ENCODE measurements at regions of chr3 and their contacts with region 1.

Region 1: GRCh38 chr3:171791695-171792082 is 18.6 kb downstream of the PLD1 start:
- DNase-seq: peak; percentile 50
- H3K4me3 Mint-ChIP-seq: peak overlapping the region; percentile 11
- H3K27ac Mint-ChIP-seq: peak overlapping the region; percentile 34
- H3K4me1 Mint-ChIP-seq: peaks cover 47% of the 10 kb centered on the region
- H3K27me3 Mint-ChIP-seq: no peaks in the 10 kb centered on the region
- CTCF ChIP-seq: no peak

Region 2: GRCh38 chr3:171646357-171647133 is 145.1 kb before region 1 on chr3:
- CTCF ChIA-PET with region 1: no interaction called
- intact Hi-C with region 1: no loop called
- DNase-seq: no peak
- H3K4me3 Mint-ChIP-seq: no peak overlapping the region
- H3K27ac Mint-ChIP-seq: no peak overlapping the region
- H3K4me1 Mint-ChIP-seq: peaks cover 9% of the 10 kb centered on the region
- H3K27me3 Mint-ChIP-seq: no peaks in the 10 kb centered on the region
- CTCF ChIP-seq: peak; percentile 63

Region 3: GRCh38 chr3:171809821-171810628 is 18.3 kb after region 1 on chr3 and contains the start of gene PLD1:
- CTCF ChIA-PET with region 1: interaction called, 10 read pairs
- intact Hi-C with region 1: no loop called
- DNase-seq: peak; percentile 97
- H3K4me3 Mint-ChIP-seq: peak within 1 kb of the TSS; percentile 96
- H3K27ac Mint-ChIP-seq: peak within 1 kb of the TSS; percentile 94
- H3K4me1 Mint-ChIP-seq: peaks cover 62% of the 10 kb centered on the region
- H3K27me3 Mint-ChIP-seq: no peaks in the 10 kb centered on the region
- CTCF ChIP-seq: no peak
- total RNA-seq, gene PLD1: 58.5 and 61.2 TPM in 2 replicates

Region 4: DNA sequence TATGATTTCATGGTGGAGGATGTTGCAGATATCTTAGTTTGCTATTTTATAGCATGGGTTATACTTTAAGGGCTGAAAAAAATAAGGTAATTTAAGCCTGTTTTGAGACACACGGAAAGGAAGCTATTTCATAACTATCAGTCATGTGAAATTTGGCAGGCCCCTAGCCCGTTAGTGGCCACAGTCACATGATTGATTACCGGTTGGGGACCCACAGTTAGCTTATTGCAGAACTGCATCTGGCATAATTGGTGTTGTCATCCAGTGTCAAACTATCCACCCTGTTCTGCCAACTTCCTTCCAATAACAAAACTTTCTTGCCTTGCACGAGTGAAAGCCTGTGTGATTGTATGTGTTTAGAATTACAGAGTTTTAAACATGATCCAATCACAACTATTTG is 282.9 kb after region 1 on chr3:
- CTCF ChIA-PET with region 1: no interaction called
- intact Hi-C with region 1: no loop called
- DNase-seq: no peak
- H3K4me3 Mint-ChIP-seq: no peak overlapping the region
- H3K27ac Mint-ChIP-seq: no peak overlapping the region
- H3K4me1 Mint-ChIP-seq: peaks cover 92% of the 10 kb centered on the region
- H3K27me3 Mint-ChIP-seq: no peaks in the 10 kb centered on the region
- CTCF ChIP-seq: no peak

Measured in Calu3 (cell line).